IMR-90 (cell line): ENCODE measurements at regions of chr17 and their contacts with region 1.

Region 1: GRCh38 chr17:794876-795275 is 12.7 kb downstream of the MRM3 start:
- DNase-seq: peak; percentile 59
- ATAC-seq: peak; percentile 18
- H3K4me3 ChIP-seq: no peak overlapping the region
- H3K27ac ChIP-seq: peak overlapping the region; percentile 19
- H3K4me1 ChIP-seq: peaks cover 12% of the 10 kb centered on the region; the same call in 1 of the 2 replicates
- H3K27me3 ChIP-seq: no peaks in the 10 kb centered on the region
- CTCF ChIP-seq: peak; percentile 63
- POLR2A ChIP-seq: no peak
- RAD21 ChIP-seq: peak; percentile 77

Region 2: DNA sequence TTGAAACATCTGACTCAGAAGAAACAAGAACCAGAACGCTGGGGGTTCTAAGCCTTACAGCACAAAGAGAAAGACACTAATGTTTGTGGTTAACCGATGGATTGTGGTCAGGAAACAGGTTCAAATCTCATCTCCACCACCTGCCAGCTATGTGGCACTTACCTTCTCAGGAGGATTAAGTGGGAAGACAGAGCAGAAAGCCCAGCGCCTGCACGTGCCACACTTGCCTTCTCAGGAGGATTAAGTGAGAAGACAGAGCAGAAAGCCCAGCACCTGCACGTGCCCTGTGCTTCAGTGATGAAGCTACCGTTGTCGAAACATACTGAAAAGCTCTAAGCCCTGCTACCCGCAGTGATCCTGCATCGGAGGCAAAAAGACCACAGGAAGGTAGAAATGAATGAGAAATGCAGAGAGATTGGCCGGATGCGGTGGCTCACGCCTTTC is 94.1 kb after region 1 on chr17:
- CTCF ChIA-PET with region 1: no interaction called
- POLR2A ChIA-PET with region 1: no interaction called
- dilution Hi-C with region 1: no loop called
- in situ Hi-C with region 1: no loop called
- intact Hi-C with region 1: no loop called
- DNase-seq: no peak
- ATAC-seq: no peak
- H3K4me3 ChIP-seq: no peak overlapping the region
- H3K27ac ChIP-seq: no peak overlapping the region
- H3K4me1 ChIP-seq: peaks cover 7% of the 10 kb centered on the region; the same call in 1 of the 2 replicates
- H3K27me3 ChIP-seq: no peaks in the 10 kb centered on the region
- CTCF ChIP-seq: no peak
- POLR2A ChIP-seq: no peak
- RAD21 ChIP-seq: no peak

Region 3: DNA sequence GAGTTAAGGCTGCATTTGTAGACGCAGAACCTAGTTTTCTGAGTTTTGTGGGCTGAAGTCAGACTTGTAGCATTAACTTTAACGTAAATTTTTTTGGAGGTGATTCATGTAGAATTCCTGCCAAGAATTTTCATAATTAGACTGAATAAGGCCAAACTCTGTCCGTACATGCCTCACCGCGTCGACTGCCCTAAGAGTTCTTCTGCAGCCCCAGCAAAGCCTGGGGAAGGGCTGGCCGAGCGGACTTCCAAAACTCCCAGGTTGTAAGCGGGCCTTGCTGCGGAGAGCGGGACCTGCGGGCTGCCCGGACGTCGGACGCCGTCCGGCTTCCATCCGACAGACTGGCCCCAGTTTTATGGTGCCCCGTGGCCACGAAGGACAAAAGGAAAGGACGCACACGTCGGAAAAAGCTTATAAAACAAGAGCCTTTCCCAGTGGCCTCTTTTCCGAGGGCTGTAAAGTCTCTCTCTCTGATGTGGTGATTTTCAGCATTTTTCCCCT is 109.2 kb after region 1 on chr17:
- CTCF ChIA-PET with region 1: no interaction called
- POLR2A ChIA-PET with region 1: no interaction called
- dilution Hi-C with region 1: no loop called
- in situ Hi-C with region 1: no loop called
- intact Hi-C with region 1: loop called (anchors 10 kb)
- DNase-seq: peak; percentile 96
- ATAC-seq: peak; percentile 87
- H3K4me3 ChIP-seq: no peak overlapping the region
- H3K27ac ChIP-seq: peak overlapping the region; percentile 90
- H3K4me1 ChIP-seq: peaks cover 26% of the 10 kb centered on the region
- H3K27me3 ChIP-seq: no peaks in the 10 kb centered on the region
- CTCF ChIP-seq: no peak
- POLR2A ChIP-seq: no peak
- RAD21 ChIP-seq: no peak; the same call in 1 of the 2 replicates

Region 4: DNA sequence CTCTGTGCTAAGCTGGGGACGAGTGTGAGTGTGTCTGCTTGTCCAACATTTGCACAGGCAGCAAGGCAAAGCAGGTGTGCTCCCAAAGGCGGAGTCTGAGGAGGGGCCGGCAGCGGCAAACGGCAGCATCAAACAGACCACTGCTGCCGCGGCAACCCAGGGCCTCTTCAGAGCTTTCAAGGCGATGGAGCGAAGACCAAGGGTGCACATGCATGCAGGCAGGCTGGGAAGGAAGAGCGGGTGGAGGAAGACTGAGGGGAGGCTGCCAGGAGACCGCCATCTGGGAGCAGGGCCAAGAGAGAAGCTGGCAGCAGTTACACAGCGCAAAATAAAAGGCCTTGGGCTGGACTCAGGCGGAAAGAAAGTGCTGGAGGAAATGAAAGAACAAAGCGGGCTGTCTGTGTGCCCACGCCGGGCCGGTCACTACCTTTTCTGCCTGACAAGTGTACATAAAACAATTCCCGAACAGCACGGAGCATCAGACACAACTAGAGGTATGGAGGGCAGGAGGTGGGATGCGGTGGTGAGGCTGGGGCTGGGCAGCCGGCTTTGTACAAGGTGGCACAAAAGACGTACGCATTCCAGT is 210.6 kb after region 1 on chr17:
- CTCF ChIA-PET with region 1: no interaction called
- POLR2A ChIA-PET with region 1: no interaction called
- dilution Hi-C with region 1: no loop called
- in situ Hi-C with region 1: no loop called
- intact Hi-C with region 1: no loop called
- DNase-seq: peak; percentile 54
- ATAC-seq: no peak
- H3K4me3 ChIP-seq: no peak overlapping the region
- H3K27ac ChIP-seq: no peak overlapping the region
- H3K4me1 ChIP-seq: peaks cover 41% of the 10 kb centered on the region
- H3K27me3 ChIP-seq: no peaks in the 10 kb centered on the region
- CTCF ChIP-seq: no peak
- POLR2A ChIP-seq: no peak
- RAD21 ChIP-seq: no peak